ENCODE measurements at regions of chr6 and their contacts with region 1.

Region 1: GRCh38 chr6:127120787-127121636 is 2.5 kb downstream of the RSPO3 start:
- DNase-seq: peak; percentile 85
- H3K4me3 Mint-ChIP-seq: peak overlapping the region; percentile 74
- H3K27ac Mint-ChIP-seq: no peak overlapping the region
- H3K4me1 Mint-ChIP-seq: peaks cover 20% of the 10 kb centered on the region
- H3K27me3 Mint-ChIP-seq: peaks cover 42% of the 10 kb centered on the region
- CTCF ChIP-seq: peak; percentile 79

Region 2: DNA sequence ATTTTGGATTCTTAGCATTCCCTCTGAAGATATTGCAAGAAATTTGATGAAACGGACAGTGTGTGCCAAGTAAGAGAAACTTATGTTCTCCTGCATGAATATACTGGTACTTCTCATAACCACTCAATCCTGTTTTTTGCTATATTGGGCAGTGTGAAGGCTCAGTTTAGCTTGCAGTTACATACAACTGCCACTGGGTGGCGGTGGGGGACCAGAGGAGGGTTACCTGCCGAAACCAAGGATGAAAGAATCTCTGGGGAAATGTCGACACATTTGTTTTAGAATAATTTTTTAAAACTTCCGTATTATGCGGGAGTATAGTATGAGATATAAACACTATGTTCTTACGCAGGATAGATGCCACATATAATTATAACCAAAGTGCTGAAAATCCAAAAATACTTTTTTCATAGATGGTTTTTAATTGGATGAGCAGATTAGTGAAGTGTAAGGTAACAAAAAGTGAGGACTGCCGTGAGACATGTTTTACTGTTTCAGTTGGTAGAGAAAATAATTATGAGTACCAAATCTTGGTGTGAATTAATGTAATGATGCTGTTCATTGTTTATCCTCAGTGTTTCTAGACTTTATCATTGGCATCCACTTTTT is 1124.9 kb before region 1 on chr6:
- CTCF ChIA-PET with region 1: no interaction called
- intact Hi-C with region 1: loop called (anchors 2 kb)
- DNase-seq: peak; percentile 72
- H3K4me3 Mint-ChIP-seq: no peak overlapping the region
- H3K27ac Mint-ChIP-seq: no peak overlapping the region
- H3K4me1 Mint-ChIP-seq: peaks cover 12% of the 10 kb centered on the region
- H3K27me3 Mint-ChIP-seq: no peaks in the 10 kb centered on the region
- CTCF ChIP-seq: peak; percentile 77

Region 3: DNA sequence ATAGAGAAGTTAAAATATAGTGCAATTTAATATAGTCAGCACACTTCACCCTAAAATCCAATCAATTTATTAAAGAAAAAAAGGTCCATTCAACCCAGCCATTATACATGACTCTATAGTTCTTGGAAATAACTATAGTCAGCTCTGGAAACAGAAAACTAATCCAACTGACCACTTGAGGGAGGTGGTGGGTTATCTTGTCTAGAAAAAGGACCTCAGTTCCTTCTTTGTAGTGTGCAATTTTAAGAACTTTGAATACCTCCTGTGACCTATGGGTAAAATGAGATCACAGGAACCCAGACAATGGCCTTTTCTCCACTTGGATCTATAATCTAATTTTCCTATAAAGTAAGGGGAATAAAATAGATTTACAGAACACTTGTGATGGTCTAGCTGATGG is 944.7 kb before region 1 on chr6:
- CTCF ChIA-PET with region 1: no interaction called
- intact Hi-C with region 1: loop called (anchors 5 kb)
- DNase-seq: peak; percentile 37
- H3K4me3 Mint-ChIP-seq: no peak overlapping the region
- H3K27ac Mint-ChIP-seq: no peak overlapping the region
- H3K4me1 Mint-ChIP-seq: peaks cover 12% of the 10 kb centered on the region
- H3K27me3 Mint-ChIP-seq: no peaks in the 10 kb centered on the region
- CTCF ChIP-seq: peak; percentile 43

Region 4: GRCh38 chr6:126361832-126362412 is 759.1 kb before region 1 on chr6:
- CTCF ChIA-PET with region 1: no interaction called
- intact Hi-C with region 1: loop called (anchors 5 kb)
- DNase-seq: no peak
- H3K4me3 Mint-ChIP-seq: no peak overlapping the region
- H3K27ac Mint-ChIP-seq: no peak overlapping the region
- H3K4me1 Mint-ChIP-seq: no peaks in the 10 kb centered on the region
- H3K27me3 Mint-ChIP-seq: no peaks in the 10 kb centered on the region
- CTCF ChIP-seq: no peak

Region 5: DNA sequence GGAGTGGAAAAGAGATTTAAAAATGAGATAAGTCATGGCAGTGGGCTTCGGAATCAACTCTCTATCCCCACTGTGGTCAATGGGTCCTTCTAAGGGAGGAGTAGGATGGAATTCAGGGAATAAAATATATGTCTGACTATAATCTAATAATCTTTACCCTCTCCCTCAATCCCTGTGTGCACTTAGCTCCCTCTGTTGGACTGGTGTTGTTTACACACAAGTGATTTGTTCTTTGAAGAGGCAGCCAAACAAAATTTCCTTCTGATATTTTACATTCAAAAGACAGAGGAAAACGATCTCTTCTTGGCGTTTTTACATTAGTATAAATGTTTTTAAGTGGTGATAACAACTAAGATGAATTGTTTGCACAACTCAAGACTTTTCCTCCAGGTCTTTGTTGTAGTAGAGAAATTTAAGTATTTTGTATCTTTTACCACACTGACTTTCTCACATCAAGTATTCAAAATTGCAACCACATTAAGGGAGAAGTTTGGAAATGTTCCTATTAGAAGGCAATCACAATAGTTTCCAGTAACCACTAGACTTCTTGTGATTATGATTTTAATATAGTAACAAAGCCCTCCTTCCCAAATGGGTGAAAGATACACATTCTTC is 463.3 kb before region 1 on chr6:
- CTCF ChIA-PET with region 1: no interaction called
- intact Hi-C with region 1: loop called (anchors 10 kb)
- DNase-seq: peak; percentile 18
- H3K4me3 Mint-ChIP-seq: no peak overlapping the region
- H3K27ac Mint-ChIP-seq: no peak overlapping the region
- H3K4me1 Mint-ChIP-seq: no peaks in the 10 kb centered on the region
- H3K27me3 Mint-ChIP-seq: no peaks in the 10 kb centered on the region
- CTCF ChIP-seq: peak; percentile 30

Region 6: DNA sequence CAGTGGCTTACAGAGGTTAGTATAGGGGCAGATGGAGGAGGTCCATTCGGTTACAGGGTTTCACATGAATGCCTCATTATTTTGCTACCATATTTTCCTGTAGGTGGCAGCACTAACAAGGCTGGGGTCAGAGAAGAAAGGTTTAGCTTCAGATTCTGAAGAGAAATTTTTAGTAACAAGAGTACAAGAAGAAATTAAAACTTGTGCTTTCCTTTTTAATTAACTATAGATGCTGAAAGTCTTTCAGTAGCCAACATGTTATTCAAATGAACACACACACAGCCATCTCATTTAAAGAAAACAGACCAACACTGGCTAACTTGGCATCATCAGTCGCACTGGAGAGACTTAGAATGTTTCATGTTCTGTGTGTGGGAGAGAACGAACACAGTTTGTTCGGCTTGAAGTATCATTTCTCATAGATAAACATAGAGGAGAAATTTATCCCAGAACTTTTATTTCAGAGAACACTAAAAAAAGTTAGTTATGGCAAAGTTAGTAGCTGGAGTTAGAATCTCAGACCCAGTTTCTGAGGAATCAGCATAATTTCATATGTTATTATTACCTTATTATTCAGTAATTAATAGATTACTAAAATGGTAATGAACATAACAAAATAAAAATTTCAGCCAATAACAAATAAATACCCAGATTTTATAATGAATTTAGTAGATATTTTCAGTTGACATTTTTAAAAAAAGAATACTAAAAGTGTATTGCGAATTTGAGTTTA is 316.5 kb before region 1 on chr6:
- CTCF ChIA-PET with region 1: no interaction called
- intact Hi-C with region 1: loop called (anchors 1 kb)
- DNase-seq: peak; percentile 32
- H3K4me3 Mint-ChIP-seq: no peak overlapping the region
- H3K27ac Mint-ChIP-seq: no peak overlapping the region
- H3K4me1 Mint-ChIP-seq: no peaks in the 10 kb centered on the region
- H3K27me3 Mint-ChIP-seq: no peaks in the 10 kb centered on the region
- CTCF ChIP-seq: no peak

Measured in Calu3 (cell line).